B cell (primary cell): ENCODE measurements at regions of chr1 and their contacts with region 1.

Region 1: GRCh38 chr1:87024936-87025540 is 110.6 kb downstream of the HS2ST1 start:
- DNase-seq: peak; percentile 33
- ATAC-seq: peak; percentile 21
- H3K4me3 ChIP-seq: no peak overlapping the region
- H3K4me3 Mint-ChIP-seq: no peak overlapping the region
- H3K27ac ChIP-seq: no peak overlapping the region
- H3K27ac Mint-ChIP-seq: no peak overlapping the region
- H3K4me1 ChIP-seq: peaks cover 0 to 4% of the 10 kb centered on the region in 2 donors
- H3K4me1 Mint-ChIP-seq: peaks cover 32% of the 10 kb centered on the region
- H3K27me3 ChIP-seq: no peaks in the 10 kb centered on the region
- H3K27me3 Mint-ChIP-seq: no peaks in the 10 kb centered on the region
- CTCF ChIP-seq: no peak

Region 2: GRCh38 chr1:86833461-86834215 is 191.4 kb before region 1 on chr1:
- CTCF ChIA-PET with region 1: interaction called, 5 read pairs
- POLR2A ChIA-PET with region 1: no interaction called
- intact Hi-C with region 1: loop called (anchors 1 kb)
- DNase-seq: peak; percentile 81
- ATAC-seq: peak; percentile 70
- H3K4me3 ChIP-seq: no peak overlapping the region
- H3K4me3 Mint-ChIP-seq: no peak overlapping the region
- H3K27ac ChIP-seq: no peak overlapping the region
- H3K27ac Mint-ChIP-seq: no peak overlapping the region
- H3K4me1 ChIP-seq: peaks cover 0 to 5% of the 10 kb centered on the region in 2 donors
- H3K4me1 Mint-ChIP-seq: peaks cover 5% of the 10 kb centered on the region
- H3K27me3 ChIP-seq: no peaks in the 10 kb centered on the region
- H3K27me3 Mint-ChIP-seq: no peaks in the 10 kb centered on the region
- CTCF ChIP-seq: peak; percentile 76

Region 3: GRCh38 chr1:88509366-88509765 is 1484.3 kb after region 1 on chr1:
- CTCF ChIA-PET with region 1: no interaction called
- POLR2A ChIA-PET with region 1: no interaction called
- intact Hi-C with region 1: no loop called
- DNase-seq: no peak
- ATAC-seq: no peak
- H3K4me3 ChIP-seq: no peak overlapping the region
- H3K4me3 Mint-ChIP-seq: no peak overlapping the region
- H3K27ac ChIP-seq: no peak overlapping the region
- H3K27ac Mint-ChIP-seq: no peak overlapping the region
- H3K4me1 ChIP-seq: no peaks in the 10 kb centered on the region
- H3K4me1 Mint-ChIP-seq: no peaks in the 10 kb centered on the region
- H3K27me3 ChIP-seq: no peaks in the 10 kb centered on the region
- H3K27me3 Mint-ChIP-seq: peaks cover 4% of the 10 kb centered on the region
- CTCF ChIP-seq: no peak